Dorsolateral prefrontal cortex (tissue), 120 donors: ENCODE measurements at regions of chr4 and their contacts with region 1.

Region 1: DNA sequence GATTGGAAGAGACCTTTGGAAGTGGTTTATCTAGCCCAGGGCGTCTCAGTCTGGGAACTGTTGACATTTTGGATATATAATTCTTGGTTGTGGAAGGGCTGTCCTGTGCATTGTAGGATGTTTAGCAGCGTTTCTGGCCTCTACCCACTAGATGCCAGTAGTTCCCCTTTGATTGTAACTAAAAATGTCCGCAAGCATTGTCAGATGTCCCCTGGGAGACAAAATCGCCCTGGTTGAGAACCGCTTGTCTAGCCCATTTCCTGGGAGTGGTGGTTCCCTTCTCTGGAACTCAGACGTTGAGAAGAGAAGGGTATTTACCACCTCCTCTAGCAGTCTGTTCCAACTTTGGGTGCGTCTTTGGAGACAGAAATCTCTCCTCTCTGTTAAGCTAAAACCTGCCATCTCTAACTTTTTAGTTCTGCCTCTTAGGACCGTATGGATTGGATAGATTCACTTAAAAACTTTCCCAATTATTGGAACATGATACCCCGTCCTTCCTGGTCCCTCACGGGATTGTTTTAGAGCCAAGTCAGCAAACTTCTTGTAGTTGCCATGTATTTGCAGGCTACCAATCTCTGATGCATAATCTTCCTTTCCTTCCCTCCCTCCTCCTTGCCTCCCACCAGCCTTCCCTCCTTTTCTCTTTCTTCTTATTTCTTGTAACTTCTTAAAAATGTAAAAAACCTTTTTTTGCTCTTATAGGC is 13.9 kb downstream of the TMEM165 start:
- DNase-seq: no peak
- H3K4me3 ChIP-seq: peak overlapping the region in 37 of 59 donors; percentile 1 to 44 (median 23)
- H3K27ac ChIP-seq: peak overlapping the region in 29 of 59 donors; percentile 0 to 63 (median 38)
- H3K27me3 ChIP-seq: no peaks in the 10 kb centered on the region
- CTCF ChIP-seq: peak in 49 of 56 donors; percentile 8 to 67 (median 38)

Region 2: DNA sequence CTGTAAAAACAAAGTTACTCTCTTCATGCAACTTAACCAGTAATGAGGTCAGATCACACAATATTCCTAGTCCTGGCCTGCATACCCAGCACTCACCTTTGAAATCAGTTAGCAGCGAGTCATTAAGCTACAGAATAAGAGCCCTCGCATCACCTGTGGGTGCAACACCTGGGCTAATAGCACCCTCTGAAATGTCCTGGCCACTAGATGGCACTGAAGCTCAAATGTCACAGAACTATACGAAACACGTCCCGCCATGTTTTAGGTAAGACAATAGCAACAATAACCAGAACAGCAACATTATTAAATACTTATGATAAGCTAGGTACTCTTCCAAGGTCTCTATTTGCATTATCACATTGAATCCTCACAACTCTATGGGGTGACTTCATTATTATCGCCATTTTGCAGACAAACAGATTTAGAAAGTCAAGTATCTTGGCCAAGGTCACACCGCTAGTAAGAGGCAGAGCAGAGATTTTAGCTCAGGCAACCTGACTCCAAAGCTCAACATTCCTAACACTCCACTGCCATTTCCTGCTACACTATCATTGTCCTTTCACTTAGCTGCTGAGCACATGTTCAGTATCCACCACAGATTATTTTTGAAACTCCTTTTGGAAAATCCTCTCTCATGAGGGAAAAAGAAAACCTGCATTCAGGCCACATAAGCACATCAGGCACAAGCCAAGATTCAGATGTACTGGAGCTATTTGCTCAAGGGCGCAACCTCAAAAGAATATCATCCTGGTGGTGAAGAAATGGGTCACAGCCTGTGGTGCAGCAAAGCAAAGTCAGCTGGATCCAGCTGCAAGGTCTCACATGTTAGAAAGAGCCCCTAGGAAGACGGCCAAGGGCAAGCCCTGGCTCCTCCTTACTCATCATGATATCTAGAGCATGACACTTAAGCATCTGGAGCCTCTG is 224.8 kb before region 1 on chr4:
- intact Hi-C with region 1: no loop called
- DNase-seq: no peak
- H3K4me3 ChIP-seq: no peak overlapping the region
- H3K27ac ChIP-seq: no peak overlapping the region
- H3K27me3 ChIP-seq: peaks cover 0 to 4% (median 0%) of the 10 kb centered on the region in 45 donors
- CTCF ChIP-seq: peak in 23 of 56 donors; percentile 5 to 45 (median 22)

Region 3: GRCh38 chr4:55458164-55458563 is 48.5 kb after region 1 on chr4:
- intact Hi-C with region 1: no loop called
- DNase-seq: no peak
- H3K4me3 ChIP-seq: no peak overlapping the region
- H3K27ac ChIP-seq: no peak overlapping the region
- H3K27me3 ChIP-seq: no peaks in the 10 kb centered on the region
- CTCF ChIP-seq: no peak

Region 4: DNA sequence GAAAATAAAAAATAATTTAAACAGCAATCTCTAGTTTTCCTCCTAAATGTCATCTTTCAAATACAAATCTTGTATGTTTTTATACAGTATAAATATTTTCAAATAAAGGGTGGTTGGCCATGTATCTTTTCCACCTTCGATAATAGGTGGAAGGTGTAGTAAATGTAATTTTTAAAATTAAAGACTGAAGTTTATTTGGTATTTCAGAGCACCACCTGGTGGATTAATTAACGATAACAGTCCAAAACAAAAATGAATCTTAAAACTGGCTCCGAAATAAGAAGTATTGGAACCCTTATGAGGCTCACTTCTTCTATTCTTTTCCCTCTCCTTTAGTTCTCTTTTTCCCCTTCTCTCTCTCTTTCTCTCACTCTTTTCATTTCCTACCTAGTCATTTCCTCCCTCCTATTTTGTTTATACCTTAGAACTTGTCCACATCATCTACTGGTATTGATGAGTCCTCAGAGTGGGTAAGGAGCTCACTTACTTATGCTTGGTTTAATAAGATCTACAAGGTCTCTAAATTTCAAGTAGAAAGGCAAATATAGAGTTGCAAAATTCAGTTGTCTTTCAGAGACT is 327.1 kb after region 1 on chr4:
- intact Hi-C with region 1: no loop called
- DNase-seq: no peak
- H3K4me3 ChIP-seq: no peak overlapping the region
- H3K27ac ChIP-seq: no peak overlapping the region
- H3K27me3 ChIP-seq: peaks cover 0 to 22% (median 0%) of the 10 kb centered on the region in 45 donors
- CTCF ChIP-seq: peak in 52 of 56 donors; percentile 18 to 71 (median 44)

Region 5: DNA sequence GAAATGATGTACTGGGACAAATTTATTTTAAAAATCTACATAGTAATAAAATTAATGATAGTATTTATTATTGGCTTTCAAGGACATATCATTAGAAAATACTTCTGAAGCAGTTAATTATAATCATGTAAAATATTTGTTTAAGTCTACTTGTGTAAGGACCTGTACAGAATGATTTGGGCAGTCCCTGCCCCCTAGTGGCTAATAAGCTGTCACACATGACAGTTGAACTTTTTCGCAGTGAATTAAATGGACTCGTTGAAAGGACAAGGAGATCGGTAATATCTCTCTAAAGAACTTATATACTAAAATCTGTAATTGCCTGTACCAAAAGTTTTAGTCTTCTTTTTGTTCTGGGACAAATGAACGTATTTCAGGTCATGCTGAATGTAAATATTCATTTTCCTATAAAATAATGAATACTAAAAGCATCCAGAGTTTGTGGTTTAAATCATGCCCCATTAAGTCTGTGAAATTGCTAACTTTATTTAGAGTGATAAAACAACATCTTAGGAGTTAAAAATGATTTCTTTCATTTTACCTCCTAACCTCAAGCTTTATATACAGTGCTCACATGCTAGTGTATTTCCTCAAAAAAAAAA is 457.5 kb after region 1 on chr4:
- intact Hi-C with region 1: loop called in 1 of 2 experiments (anchors 10 kb)
- DNase-seq: no peak
- H3K4me3 ChIP-seq: no peak overlapping the region
- H3K27ac ChIP-seq: peak overlapping the region in 2 of 59 donors; percentile 14 to 36
- H3K27me3 ChIP-seq: no peaks in the 10 kb centered on the region
- CTCF ChIP-seq: peak; percentile 49 to 85 (median 73)